ENCODE measurements at regions of chr4 and their contacts with region 1.

Region 1: GRCh38 chr4:118835571-118836300 is at the start of gene SEC24D:
- DNase-seq: peak; percentile 83
- H3K4me3 Mint-ChIP-seq: peak within 1 kb of the TSS; percentile 100
- H3K27ac Mint-ChIP-seq: peak within 1 kb of the TSS; percentile 99
- H3K4me1 Mint-ChIP-seq: peaks cover 27% of the 10 kb centered on the region
- H3K27me3 Mint-ChIP-seq: peaks cover 8% of the 10 kb centered on the region
- total RNA-seq, gene SEC24D: 54.8 and 60.0 TPM in 2 replicates

Region 2: DNA sequence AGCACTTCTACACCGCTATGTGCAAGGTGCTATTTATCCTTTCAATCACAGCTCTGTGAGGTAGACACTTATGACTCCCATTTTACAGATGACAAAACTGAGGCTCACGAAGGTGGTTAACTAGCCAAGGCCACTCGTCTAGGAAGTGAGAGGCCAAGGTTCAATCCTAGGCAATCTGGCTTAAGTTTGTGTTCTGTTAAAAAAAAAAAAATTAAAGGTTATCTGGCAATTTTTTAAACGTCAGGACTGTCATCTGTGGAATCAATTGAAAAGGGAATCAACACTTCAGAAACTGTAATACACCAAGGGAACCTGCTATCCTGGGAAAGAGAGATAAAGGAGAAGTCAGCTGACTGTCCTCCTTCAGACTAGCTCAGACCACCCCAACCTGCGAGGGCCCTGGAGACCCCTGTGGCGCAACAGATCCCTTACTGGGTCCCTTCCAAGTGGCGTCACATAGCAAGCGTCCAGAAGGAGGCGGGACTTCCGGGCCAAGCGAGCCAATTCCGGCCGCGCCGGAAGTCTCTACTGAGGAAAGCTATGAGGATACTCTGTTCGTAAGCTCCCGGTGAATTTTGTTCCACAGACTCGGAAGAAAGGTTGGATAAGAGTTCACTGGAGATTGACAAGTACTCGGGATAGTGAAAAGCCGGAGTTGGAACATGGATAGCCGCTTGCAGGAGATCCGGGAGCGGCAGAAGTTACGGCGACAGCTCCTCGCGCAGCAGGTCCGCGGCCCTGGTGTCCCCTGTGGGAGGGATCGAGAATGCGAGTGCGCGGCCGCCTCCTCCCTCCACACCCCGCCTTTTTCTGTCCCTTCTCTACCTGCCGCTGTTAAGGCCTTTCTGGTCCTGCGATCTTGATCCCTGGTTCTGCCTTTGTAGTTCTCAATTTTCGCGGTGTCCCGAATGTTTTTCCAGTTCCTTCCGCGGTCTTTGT is 150.6 kb before region 1 on chr4 and contains the start of gene METTL14:
- intact Hi-C with region 1: loop called (anchors 5 kb)
- DNase-seq: peak; percentile 82
- H3K4me3 Mint-ChIP-seq: peak within 1 kb of the TSS; percentile 100
- H3K27ac Mint-ChIP-seq: peak within 1 kb of the TSS; percentile 95
- H3K4me1 Mint-ChIP-seq: peaks cover 16% of the 10 kb centered on the region
- H3K27me3 Mint-ChIP-seq: peaks cover 3% of the 10 kb centered on the region
- total RNA-seq, gene METTL14: 43.6 and 48.0 TPM in 2 replicates

Region 3: GRCh38 chr4:118783887-118784286 is 51.8 kb before region 1 on chr4:
- intact Hi-C with region 1: no loop called
- DNase-seq: no peak
- H3K4me3 Mint-ChIP-seq: no peak overlapping the region
- H3K27ac Mint-ChIP-seq: no peak overlapping the region
- H3K4me1 Mint-ChIP-seq: no peaks in the 10 kb centered on the region
- H3K27me3 Mint-ChIP-seq: no peaks in the 10 kb centered on the region

Region 4: GRCh38 chr4:118810991-118811764 is 24.6 kb before region 1 on chr4:
- intact Hi-C with region 1: no loop called
- DNase-seq: no peak
- H3K4me3 Mint-ChIP-seq: no peak overlapping the region
- H3K27ac Mint-ChIP-seq: no peak overlapping the region
- H3K4me1 Mint-ChIP-seq: peaks cover 3% of the 10 kb centered on the region
- H3K27me3 Mint-ChIP-seq: no peaks in the 10 kb centered on the region

Region 5: GRCh38 chr4:118850488-118851173 is 14.9 kb after region 1 on chr4:
- intact Hi-C with region 1: loop called (anchors 2 kb)
- DNase-seq: peak; percentile 29
- H3K4me3 Mint-ChIP-seq: peak overlapping the region; percentile 93
- H3K27ac Mint-ChIP-seq: peak overlapping the region; percentile 92
- H3K4me1 Mint-ChIP-seq: peaks cover 13% of the 10 kb centered on the region
- H3K27me3 Mint-ChIP-seq: peaks cover 13% of the 10 kb centered on the region

Region 6: DNA sequence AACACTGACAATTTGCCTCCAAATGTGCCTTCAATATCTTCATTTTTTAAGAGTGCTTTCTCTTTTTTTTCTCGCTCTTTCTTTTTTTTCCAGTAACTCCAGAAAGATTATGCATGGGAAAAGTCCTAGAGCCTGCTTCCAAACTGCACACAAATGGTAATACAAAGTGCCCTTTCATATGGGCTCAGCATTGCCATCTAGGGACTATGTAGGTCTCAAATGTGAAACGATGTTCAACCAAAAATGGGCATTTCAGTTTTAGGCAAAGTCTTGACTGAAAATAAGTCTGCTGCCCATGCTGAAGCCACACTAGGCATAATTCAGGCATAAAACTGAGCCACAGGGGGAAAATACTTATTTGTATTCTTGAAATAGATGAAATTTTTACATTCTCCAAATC is 118.5 kb after region 1 on chr4:
- intact Hi-C with region 1: no loop called
- DNase-seq: no peak
- H3K4me3 Mint-ChIP-seq: no peak overlapping the region
- H3K27ac Mint-ChIP-seq: no peak overlapping the region
- H3K4me1 Mint-ChIP-seq: no peaks in the 10 kb centered on the region
- H3K27me3 Mint-ChIP-seq: peaks cover 3% of the 10 kb centered on the region

Region 7: DNA sequence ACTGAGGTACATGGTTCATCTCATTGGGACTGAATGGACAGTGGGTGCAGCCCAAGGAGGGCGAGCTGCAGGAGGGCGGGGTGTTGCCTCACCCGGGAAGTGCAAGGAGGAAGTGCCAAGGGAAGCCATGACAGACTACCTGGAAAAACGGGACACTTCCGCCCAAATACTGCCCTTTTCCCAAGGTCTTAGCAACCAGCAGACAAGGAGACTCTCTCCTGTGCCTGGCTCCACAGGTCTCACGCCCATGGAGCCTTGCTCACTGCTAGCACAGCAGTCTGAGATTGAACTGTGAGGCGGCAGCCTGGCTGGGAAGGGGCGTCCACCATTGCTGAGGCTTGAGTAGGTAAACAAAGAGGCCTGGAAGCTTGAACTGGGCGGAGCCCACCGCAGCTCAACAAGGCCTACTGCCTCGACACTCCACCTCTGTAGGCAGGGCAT is 362.1 kb after region 1 on chr4:
- intact Hi-C with region 1: no loop called
- DNase-seq: no peak
- H3K4me3 Mint-ChIP-seq: no peak overlapping the region
- H3K27ac Mint-ChIP-seq: no peak overlapping the region
- H3K4me1 Mint-ChIP-seq: peaks cover 2% of the 10 kb centered on the region
- H3K27me3 Mint-ChIP-seq: peaks cover 8% of the 10 kb centered on the region

Region 8: GRCh38 chr4:119212234-119212963 is 376.7 kb after region 1 on chr4 and contains the start of gene USP53:
- intact Hi-C with region 1: loop called (anchors 2 kb)
- DNase-seq: peak; percentile 93
- H3K4me3 Mint-ChIP-seq: peak within 1 kb of the TSS; percentile 91
- H3K27ac Mint-ChIP-seq: peak within 1 kb of the TSS; percentile 88
- H3K4me1 Mint-ChIP-seq: peaks cover 33% of the 10 kb centered on the region
- H3K27me3 Mint-ChIP-seq: peaks cover 8% of the 10 kb centered on the region
- total RNA-seq, gene USP53: 6.6 and 7.3 TPM in 2 replicates

Measured in activated T-helper 2 cell treated with anti-CD3 and anti-CD28 coated beads, Interferon-gamma antibody, Interleukin-2, Interleukin-4, amounts not matched to agents 10 μg/mL and 5 μg/mL and 100 μg/mL, durations not matched to agents 14 hours and 24 hours and 36 hours (primary cell).